Spleen (tissue), 13 donors: ENCODE measurements at regions of chr17 and their contacts with region 1.

Region 1: DNA sequence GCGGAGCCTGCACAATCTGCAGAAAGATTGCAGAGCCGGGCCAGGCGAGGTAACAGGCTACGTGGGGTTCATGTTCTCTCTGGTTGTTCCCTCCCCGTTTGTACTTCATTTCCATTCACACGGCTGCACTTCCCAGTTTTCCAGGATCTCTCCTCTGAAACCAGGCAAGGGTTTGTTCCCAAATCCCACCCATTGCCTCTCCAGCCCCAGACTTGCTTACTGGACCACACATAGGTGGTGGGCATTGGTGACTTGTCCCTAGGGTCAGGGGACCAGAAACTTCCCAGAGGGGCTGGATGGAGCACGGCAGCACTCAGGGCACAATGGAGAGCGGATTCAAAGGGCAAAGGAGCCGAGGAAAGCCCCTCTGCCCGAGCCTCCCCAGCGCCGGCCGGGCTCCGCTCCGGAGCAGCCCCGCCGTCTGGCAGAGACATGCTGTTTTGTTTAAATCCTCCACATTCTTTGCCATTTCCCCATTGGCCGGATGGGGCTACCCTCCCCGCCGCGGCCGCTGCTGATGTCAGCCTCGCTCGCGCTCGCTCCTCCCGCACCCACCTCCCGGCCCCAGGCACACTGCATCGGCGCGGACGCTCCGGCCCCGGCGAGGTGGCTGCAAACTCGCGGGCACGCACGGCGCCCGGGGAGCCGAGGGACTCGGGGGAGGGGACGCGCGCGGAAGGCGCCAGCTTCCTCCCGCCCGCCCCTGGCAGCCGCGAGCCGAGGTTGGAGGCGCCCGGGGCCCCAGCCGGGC is at the start of gene PITPNC1:
- DNase-seq: peak; percentile 97
- H3K4me3 ChIP-seq: peak within 1 kb of the TSS; percentile 59 to 92 (median 84)
- H3K27ac ChIP-seq: peak within 1 kb of the TSS; percentile 85 to 95 (median 92)
- H3K4me1 ChIP-seq: peaks cover 9 to 68% (median 36%) of the 10 kb centered on the region in 6 donors
- H3K27me3 ChIP-seq: no peaks in the 10 kb centered on the region
- CTCF ChIP-seq: peak in 4 of 11 experiments; percentile 10 to 49 (median 36)
- POLR2A ChIP-seq: peak in 1 of 3 donors; percentile 37
- total RNA-seq, gene PITPNC1: 12.6 to 33.8 (median 23.9) TPM

Region 2: DNA sequence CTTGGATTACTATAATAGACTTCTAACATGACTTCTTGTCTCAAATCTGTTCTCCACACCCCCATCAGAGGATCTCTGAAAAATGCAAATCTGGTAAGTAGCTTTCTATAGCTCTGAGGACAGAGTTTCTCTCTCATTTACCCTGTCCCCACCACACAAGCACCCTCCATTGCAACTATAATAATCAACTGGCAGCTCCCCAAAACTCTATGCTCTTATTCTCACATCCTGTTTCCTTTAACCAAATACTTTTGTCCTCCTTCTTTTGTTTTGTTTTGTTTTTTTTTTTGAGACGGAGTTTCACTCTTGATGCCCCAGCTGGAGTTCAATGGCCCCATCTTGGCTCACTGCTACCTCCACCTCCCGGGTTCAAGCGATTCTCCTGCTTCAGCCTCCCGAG is 205.4 kb before region 1 on chr17:
- intact Hi-C with region 1: no loop called
- DNase-seq: no peak
- H3K4me3 ChIP-seq: no peak overlapping the region
- H3K27ac ChIP-seq: no peak overlapping the region
- H3K4me1 ChIP-seq: peaks cover 0 to 16% (median 0%) of the 10 kb centered on the region in 6 donors
- H3K27me3 ChIP-seq: no peaks in the 10 kb centered on the region
- CTCF ChIP-seq: no peak
- POLR2A ChIP-seq: no peak

Region 3: DNA sequence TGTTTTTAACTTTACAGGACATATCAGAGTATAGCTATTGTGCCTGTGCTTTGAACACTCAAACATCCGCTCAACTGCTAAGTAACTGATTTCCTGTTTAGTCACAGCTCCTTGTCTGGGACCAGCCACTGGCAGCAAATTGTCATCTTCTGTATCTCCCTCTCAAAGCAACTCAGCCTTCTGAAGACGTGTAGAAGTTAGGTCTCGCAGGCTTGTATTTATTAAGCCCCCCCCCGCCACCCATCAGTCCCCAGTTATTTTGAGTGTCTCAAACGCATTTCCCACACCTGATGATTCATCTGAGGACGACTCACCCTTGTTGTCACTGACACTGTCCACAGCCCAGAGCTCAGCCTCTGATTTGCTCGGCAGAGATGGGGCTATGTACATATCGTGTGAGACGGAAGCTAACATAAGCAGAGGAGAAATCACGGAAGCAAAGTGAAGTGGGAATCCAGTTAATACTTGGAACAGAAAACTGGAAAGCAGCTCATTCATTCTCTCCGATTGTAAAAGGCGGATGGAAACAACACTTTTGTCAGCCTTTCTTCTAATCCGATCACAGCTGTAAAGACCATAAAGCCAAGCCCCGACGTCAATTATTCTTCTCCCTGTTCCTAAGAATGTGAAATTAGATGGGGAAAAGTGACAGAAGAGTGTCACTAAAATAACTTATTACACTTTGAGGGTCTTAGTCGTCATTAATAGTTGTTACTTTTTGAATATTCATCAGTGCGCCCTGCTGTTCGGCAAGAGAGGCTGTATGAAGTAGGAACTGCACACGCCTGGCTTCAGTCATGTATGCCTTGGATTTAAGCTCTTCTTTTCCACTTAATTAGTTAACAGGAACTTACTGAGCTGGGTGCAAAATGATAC is 64.4 kb after region 1 on chr17:
- intact Hi-C with region 1: no loop called
- DNase-seq: no peak
- H3K4me3 ChIP-seq: peak overlapping the region in 1 of 8 donors; percentile 35
- H3K27ac ChIP-seq: peak overlapping the region; percentile 48 to 91 (median 79)
- H3K4me1 ChIP-seq: peaks cover 0 to 97% (median 45%) of the 10 kb centered on the region in 6 donors
- H3K27me3 ChIP-seq: no peaks in the 10 kb centered on the region
- CTCF ChIP-seq: no peak
- POLR2A ChIP-seq: no peak

Region 4: GRCh38 chr17:67475236-67475937 is 98.5 kb after region 1 on chr17:
- intact Hi-C with region 1: loop called (anchors 2 kb)
- DNase-seq: peak; percentile 92
- H3K4me3 ChIP-seq: peak overlapping the region in 1 of 8 donors; percentile 35
- H3K27ac ChIP-seq: peak overlapping the region in 7 of 8 donors; percentile 54 to 85 (median 69)
- H3K4me1 ChIP-seq: peaks cover 4 to 67% (median 28%) of the 10 kb centered on the region in 6 donors
- H3K27me3 ChIP-seq: no peaks in the 10 kb centered on the region
- CTCF ChIP-seq: peak; percentile 69 to 96 (median 91)
- POLR2A ChIP-seq: no peak

Region 5: GRCh38 chr17:67559377-67559966 is 182.6 kb after region 1 on chr17:
- intact Hi-C with region 1: no loop called
- DNase-seq: no peak
- H3K4me3 ChIP-seq: no peak overlapping the region
- H3K27ac ChIP-seq: no peak overlapping the region
- H3K4me1 ChIP-seq: no peaks in the 10 kb centered on the region
- H3K27me3 ChIP-seq: no peaks in the 10 kb centered on the region
- CTCF ChIP-seq: peak in 2 of 11 experiments; percentile 18 to 23
- POLR2A ChIP-seq: no peak

Region 6: DNA sequence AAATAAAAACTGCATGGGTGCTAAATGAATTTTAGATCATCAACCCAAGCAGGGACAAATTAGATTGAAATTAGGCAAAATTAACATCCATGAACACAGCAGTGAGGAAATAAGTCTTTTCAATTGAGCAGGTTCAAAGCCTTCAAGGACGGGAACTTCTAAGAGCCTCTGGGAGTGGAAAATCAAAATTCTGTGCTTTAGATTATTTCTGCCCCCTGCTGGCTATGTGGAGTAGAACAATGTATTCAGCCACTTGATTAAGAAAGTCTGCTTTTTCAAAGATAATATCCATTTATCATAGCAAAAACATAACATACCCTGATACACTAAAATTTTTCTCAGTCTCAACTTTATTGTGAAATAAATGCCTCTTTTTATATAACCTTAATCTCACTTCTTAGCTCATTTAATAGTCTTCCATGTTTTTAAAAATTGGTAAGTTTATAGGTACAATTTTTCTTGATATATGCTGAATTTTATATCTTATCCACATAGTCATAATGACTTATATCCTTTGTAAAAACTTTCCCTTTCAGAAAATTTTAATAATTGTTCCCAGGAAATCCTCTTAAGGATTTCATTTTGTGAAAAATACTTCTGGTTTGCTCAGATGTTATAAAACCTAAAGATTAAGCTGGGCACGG is 312.7 kb after region 1 on chr17:
- intact Hi-C with region 1: loop called (anchors 5 kb)
- DNase-seq: no peak
- H3K4me3 ChIP-seq: no peak overlapping the region
- H3K27ac ChIP-seq: no peak overlapping the region
- H3K4me1 ChIP-seq: peaks cover 0 to 6% (median 4%) of the 10 kb centered on the region in 6 donors
- H3K27me3 ChIP-seq: no peaks in the 10 kb centered on the region
- CTCF ChIP-seq: peak; percentile 28 to 82 (median 77)
- POLR2A ChIP-seq: no peak

Region 7: DNA sequence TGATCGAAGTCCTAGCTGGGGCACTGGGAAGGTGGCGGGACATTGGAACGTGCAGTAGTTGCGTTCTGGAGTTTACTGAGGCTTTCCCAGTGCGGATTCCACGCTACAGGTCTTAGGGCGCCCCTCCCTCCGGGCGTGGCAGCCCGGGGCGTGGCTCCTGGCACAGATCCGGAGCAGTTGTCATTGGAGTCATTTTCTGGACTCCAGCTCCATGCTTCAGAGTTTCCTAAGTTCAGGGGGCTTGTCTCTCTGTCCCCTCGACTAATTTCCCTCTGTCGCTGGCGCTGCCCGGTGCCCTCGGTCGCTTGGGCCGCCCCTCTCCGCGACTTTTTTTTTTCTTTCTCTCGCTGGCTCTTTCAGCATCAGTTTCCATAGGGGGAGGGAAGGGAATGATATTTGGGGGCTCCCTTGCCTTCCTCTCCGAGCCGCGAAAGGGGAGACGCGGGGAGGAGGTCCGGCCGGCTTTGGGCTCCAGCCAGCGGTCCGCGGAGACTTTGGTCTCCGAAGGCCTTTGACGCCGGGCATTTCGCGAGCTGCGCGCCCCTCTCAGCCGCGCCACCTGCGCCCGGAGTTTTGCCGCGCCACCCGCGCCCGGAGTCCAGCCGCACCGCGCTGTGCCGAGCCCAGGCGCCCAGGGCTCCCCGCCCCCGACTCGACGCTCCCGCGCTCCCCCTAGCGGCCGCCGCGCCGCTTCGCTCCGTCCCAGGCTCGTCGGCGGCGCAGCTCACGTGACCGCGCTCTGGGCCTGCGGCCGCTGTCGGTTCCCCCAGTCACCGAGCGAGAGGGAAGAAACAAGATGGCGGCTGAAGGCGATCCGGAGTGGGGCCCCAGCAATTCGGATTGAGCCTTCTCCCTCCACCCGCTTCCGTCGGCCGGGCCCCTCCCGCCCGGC is 448.1 kb after region 1 on chr17 and contains the start of gene BPTF:
- intact Hi-C with region 1: loop called (anchors 10 kb)
- DNase-seq: peak; percentile 100
- H3K4me3 ChIP-seq: peak within 1 kb of the TSS; percentile 54 to 86 (median 75)
- H3K27ac ChIP-seq: peak within 1 kb of the TSS; percentile 91 to 98 (median 96)
- H3K4me1 ChIP-seq: peaks cover 26 to 66% (median 47%) of the 10 kb centered on the region in 6 donors
- H3K27me3 ChIP-seq: peaks cover 0 to 12% (median 0%) of the 10 kb centered on the region in 7 donors
- CTCF ChIP-seq: peak in 10 of 11 experiments; percentile 73 to 100 (median 98)
- POLR2A ChIP-seq: peak in 1 of 3 donors; percentile 26
- total RNA-seq, gene BPTF: 113 to 148 (median 128) TPM